Activated CD4-positive, alpha-beta T cell treated with anti-CD3 and anti-CD28 coated beads, Interleukin-2, amount 10 ng/mL, durations not matched to agents 24 days and 14 days (primary cell): ENCODE measurements at regions of chr10 and their contacts with region 1.

Region 1: GRCh38 chr10:63173468-63174232 is 40.5 kb downstream of the NRBF2 start:
- DNase-seq: peak; percentile 72
- H3K4me3 Mint-ChIP-seq: peak overlapping the region; percentile 41
- H3K27ac Mint-ChIP-seq: peak overlapping the region; percentile 81
- H3K4me1 Mint-ChIP-seq: peaks cover 52% of the 10 kb centered on the region
- H3K27me3 Mint-ChIP-seq: no peaks in the 10 kb centered on the region

Region 2: GRCh38 chr10:63204667-63205391 is 31.2 kb after region 1 on chr10:
- intact Hi-C with region 1: loop called (anchors 2 kb)
- DNase-seq: peak; percentile 63
- H3K4me3 Mint-ChIP-seq: peak overlapping the region; percentile 71
- H3K27ac Mint-ChIP-seq: peak overlapping the region; percentile 67
- H3K4me1 Mint-ChIP-seq: peaks cover 43% of the 10 kb centered on the region
- H3K27me3 Mint-ChIP-seq: no peaks in the 10 kb centered on the region

Region 3: DNA sequence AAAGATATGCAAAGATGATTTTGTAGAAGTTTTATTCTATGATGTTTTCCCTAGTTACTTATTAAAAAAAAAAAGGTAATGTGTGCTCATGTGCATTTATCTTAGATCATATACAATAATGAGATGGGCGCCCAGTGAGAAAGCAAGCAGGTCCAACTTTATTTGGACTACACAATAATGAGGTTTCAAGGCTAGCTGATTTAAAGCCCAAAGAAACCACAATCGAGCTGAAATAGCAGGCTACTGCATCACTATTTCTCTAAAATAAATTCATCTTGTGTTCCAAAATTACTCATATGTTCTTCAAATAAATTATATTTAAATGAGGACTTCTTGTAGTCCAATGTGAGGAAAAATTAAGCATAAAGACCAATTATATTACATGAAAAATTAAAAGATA is 182.0 kb after region 1 on chr10:
- intact Hi-C with region 1: loop called (anchors 2 kb)
- DNase-seq: no peak
- H3K4me3 Mint-ChIP-seq: no peak overlapping the region
- H3K27ac Mint-ChIP-seq: peak overlapping the region; percentile 63
- H3K4me1 Mint-ChIP-seq: peaks cover 14% of the 10 kb centered on the region
- H3K27me3 Mint-ChIP-seq: no peaks in the 10 kb centered on the region

Region 4: GRCh38 chr10:63521416-63522276 is 348.0 kb after region 1 on chr10:
- intact Hi-C with region 1: loop called (anchors 5 kb)
- DNase-seq: peak; percentile 87
- H3K4me3 Mint-ChIP-seq: peak overlapping the region; percentile 91
- H3K27ac Mint-ChIP-seq: peak overlapping the region; percentile 94
- H3K4me1 Mint-ChIP-seq: peaks cover 52% of the 10 kb centered on the region
- H3K27me3 Mint-ChIP-seq: no peaks in the 10 kb centered on the region